Activated T-helper 1 cell treated with anti-CD3 and anti-CD28 coated beads, Interleukin-12 subunit alpha, Interleukin-12 subunit beta, Interleukin-2, Interleukin-4 antibody, amounts not matched to agents 30 ng/mL and 10 ng/mL and 1 ng/mL, durations not matched to agents 14 hours and 24 hours and 36 hours (primary cell): ENCODE measurements at regions of chr19 and their contacts with region 1.

Region 1: DNA sequence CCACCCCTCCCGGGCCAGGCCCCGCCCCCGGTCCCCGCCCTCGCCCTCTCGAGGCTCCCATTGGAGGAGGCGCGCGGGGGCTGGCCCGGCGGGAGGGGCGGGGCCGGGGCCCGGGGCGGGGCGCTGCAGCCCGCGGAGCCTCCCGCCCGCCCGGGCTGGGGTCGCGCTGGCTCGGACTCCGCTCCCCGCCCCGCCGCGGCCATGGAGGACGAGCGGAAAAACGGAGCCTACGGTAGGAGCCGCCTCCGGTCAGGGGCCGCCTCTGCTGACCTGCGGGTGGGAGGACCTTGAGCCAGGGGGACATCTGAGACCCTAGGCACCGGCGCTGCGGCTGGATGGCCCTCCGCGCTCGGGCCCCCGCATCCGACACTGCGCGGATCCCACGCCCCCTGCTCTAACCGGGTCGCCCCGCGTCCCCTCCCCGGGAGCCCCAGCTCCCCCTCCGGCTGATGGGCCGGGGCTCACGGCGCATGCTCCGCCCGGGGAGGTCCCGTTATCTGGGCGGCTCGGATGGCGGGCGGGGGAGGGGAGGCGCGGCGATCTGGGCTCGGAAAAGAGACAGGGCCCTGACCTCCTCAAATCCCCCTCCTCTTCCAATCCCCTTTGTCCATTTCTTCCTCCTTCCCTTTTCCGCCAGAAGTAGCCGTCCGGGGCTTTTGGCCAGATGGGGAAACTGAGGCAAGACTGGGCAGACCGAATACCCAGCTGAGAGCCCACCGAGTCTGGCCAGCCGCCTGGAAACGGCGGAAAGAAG is 15.4 kb upstream of the AP1M2 start:
- DNase-seq: peak; percentile 75
- H3K4me3 Mint-ChIP-seq: peak overlapping the region; percentile 99
- H3K27ac Mint-ChIP-seq: peak overlapping the region; percentile 100
- H3K4me1 Mint-ChIP-seq: peaks cover 24% of the 10 kb centered on the region
- H3K27me3 Mint-ChIP-seq: peaks cover 8% of the 10 kb centered on the region

Region 2: GRCh38 chr19:10510301-10510802 is 92.2 kb before region 1 on chr19:
- intact Hi-C with region 1: no loop called
- DNase-seq: peak; percentile 55
- H3K4me3 Mint-ChIP-seq: no peak overlapping the region
- H3K27ac Mint-ChIP-seq: no peak overlapping the region
- H3K4me1 Mint-ChIP-seq: peaks cover 12% of the 10 kb centered on the region
- H3K27me3 Mint-ChIP-seq: peaks cover 29% of the 10 kb centered on the region

Region 3: DNA sequence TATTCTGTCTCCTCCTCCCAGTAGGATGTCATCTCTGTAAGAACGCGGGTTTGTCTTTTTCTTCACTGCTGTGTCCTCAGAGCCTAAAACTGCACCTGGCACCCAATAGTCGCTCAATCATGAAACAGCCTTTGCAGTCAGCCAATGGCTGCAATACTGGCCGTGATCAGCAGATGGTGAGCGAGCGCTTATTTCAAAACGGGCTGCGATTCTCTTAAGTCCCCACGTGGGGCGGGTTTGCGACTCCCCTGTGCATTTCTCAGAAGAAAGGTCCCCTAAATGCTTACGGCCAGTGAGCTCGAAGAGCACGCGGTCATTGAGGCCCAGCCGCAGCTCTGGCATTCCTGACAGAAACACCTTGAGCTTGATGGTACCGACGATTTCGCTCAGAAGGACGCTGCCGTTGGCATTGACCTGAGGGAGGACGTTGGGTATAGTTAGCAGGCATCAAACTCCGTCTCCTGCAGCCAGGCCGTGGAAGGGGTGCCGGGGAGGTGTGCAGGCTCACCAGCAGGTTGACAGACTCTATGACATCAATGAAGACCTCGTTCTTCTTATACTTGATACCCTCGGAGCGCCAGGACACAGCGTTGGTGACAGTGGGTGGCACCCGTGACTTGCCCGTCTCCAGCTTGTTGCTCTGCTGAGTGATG is 21.4 kb before region 1 on chr19:
- intact Hi-C with region 1: loop called (anchors 1 kb)
- DNase-seq: peak; percentile 81
- H3K4me3 Mint-ChIP-seq: no peak overlapping the region
- H3K27ac Mint-ChIP-seq: no peak overlapping the region
- H3K4me1 Mint-ChIP-seq: peaks cover 12% of the 10 kb centered on the region
- H3K27me3 Mint-ChIP-seq: peaks cover 6% of the 10 kb centered on the region

Region 4: DNA sequence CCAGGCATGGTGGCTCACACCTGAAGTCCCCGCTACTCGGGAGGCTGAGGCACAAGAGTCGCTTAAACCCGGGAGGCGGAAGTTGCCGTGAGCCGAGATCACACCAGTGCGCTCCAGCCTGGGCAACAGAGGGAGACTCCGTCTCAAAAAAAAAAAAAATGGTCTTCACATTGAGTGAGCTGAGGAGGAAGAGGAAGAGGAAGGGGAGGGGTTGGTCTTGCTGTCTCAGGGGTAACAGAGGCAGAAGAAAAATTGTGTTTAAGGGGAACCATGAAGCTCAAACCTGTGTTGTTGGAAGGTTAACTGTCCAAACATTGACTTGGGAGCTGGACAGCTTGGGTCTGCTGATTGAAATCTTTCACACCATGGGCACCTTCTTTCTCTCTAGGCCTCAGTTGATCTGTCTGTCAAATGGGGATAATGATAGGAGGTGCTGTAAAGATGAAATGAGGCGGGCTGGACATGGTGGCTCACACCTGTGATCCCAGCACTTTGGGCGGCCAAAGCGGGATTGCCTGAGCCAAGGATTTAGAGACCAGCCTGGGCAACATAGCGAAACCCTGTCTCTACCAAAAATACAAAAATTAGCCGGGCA is 13.0 kb after region 1 on chr19:
- intact Hi-C with region 1: no loop called
- DNase-seq: no peak
- H3K4me3 Mint-ChIP-seq: no peak overlapping the region
- H3K27ac Mint-ChIP-seq: no peak overlapping the region
- H3K4me1 Mint-ChIP-seq: peaks cover 6% of the 10 kb centered on the region
- H3K27me3 Mint-ChIP-seq: no peaks in the 10 kb centered on the region

Region 5: DNA sequence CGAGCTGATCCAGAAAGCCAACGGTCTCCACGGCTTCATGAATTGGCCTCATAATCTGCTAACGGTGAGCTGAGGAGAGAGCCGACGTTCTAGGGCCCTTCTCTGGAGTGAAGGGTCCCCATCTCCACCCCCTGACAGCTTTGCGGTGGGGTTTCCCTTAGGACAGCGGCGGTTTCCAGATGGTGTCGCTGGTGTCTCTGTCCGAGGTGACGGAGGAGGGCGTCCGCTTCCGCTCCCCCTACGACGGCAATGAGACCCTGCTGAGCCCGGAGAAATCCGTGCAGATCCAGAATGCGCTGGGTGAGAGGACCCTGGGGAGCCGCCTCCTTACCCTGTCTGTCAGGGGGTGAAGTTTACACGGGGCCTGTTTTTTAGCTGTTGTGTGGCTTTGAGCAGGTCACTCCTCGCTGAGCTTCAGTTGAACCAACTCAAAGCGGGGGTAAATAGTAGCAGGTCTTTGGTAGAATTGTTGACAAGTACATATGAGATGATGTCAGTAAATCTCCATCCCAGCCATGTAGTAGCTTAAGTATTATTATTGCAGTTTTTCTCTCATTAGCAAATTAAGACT is 99.5 kb after region 1 on chr19:
- intact Hi-C with region 1: loop called (anchors 1 kb)
- DNase-seq: no peak
- H3K4me3 Mint-ChIP-seq: peak overlapping the region; percentile 90
- H3K27ac Mint-ChIP-seq: peak overlapping the region; percentile 72
- H3K4me1 Mint-ChIP-seq: peaks cover 13% of the 10 kb centered on the region
- H3K27me3 Mint-ChIP-seq: peaks cover 1% of the 10 kb centered on the region

Region 6: DNA sequence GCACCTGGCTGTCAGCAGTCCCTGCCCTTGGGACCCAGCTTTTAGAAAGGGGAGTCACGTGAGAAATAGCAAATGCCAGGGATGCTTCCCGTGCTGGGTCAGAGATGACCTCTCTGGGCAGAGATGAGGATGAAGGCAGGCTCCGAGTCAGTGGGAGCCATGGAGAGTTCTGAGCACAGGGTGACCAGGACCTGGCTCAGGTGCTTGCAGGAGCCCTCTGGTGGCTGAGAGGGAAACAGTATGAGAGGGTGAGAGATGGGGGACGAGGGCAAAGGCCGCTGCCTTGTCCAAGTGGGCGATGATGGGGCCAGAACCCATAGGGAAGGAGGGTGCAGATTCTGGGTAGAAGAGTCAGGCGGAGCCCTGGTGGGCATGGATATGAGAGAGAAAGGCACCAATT is 217.7 kb after region 1 on chr19:
- intact Hi-C with region 1: no loop called
- DNase-seq: no peak
- H3K4me3 Mint-ChIP-seq: no peak overlapping the region
- H3K27ac Mint-ChIP-seq: peak overlapping the region; percentile 29
- H3K4me1 Mint-ChIP-seq: peaks cover 11% of the 10 kb centered on the region
- H3K27me3 Mint-ChIP-seq: no peaks in the 10 kb centered on the region

Region 7: DNA sequence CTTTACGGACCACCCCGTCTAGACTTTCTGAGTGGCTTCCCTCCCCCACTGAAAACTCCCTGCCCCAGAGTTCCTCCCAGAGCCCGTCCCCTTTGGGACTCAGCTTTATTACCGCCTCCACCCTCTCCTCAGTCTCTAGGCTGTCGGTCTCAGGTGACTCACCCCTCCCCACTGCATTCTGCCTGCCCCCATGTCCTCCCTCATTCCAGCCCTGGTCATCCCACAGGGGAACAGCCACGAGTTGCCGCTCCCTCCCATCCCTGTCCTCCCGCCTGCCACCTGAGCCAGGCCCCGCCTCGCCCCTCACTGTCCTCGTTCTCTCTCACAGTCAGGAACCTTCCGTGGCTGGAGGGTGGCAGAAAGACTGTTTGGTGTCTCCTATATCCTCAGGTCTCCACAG is 415.7 kb after region 1 on chr19:
- intact Hi-C with region 1: no loop called
- DNase-seq: no peak
- H3K4me3 Mint-ChIP-seq: no peak overlapping the region
- H3K27ac Mint-ChIP-seq: no peak overlapping the region
- H3K4me1 Mint-ChIP-seq: no peaks in the 10 kb centered on the region
- H3K27me3 Mint-ChIP-seq: no peaks in the 10 kb centered on the region